GM13977 (cell line): ENCODE measurements at regions of chr12 and their contacts with region 1.

Region 1: DNA sequence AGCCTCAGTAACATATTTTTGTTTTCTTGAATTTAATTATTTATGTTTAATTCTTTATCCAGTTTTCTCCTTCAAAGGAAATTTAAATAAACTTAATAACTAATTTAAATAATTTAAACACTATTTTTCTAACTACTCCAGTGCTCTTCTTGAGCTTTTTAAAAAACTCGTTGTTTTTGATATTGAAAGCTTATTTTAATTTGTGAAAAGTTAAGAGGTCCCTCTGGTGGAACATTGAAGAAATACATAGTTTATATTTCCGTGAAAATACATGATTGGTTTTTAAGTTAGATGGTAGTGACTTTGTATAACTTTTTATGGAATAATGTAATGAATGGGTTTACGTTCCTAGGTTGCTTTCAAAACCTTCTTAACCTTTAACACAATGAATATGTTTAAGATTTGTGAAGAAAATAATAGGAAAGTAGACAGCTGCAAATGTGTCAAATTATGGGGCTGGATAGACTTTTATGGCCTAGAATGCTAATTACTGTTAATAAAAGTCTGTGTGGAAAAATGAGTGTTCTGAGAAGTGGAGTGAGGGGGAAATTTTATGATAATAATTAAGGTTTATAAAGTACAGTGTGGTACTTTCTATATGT is 45.9 kb upstream of the MSRB3 start:
- DNase-seq: peak; percentile 24
- CTCF ChIP-seq: peak; percentile 30

Region 2: GRCh38 chr12:64890873-64891468 is 341.6 kb before region 1 on chr12:
- in situ Hi-C with region 1: loop called (anchors 25 kb)
- DNase-seq: peak; percentile 46
- CTCF ChIP-seq: peak; percentile 64

Region 3: GRCh38 chr12:65169320-65170208 is 63.0 kb before region 1 on chr12 and contains the start of gene LEMD3:
- in situ Hi-C with region 1: loop called (anchors 10 kb)
- DNase-seq: peak; percentile 95
- CTCF ChIP-seq: no peak

Region 4: DNA sequence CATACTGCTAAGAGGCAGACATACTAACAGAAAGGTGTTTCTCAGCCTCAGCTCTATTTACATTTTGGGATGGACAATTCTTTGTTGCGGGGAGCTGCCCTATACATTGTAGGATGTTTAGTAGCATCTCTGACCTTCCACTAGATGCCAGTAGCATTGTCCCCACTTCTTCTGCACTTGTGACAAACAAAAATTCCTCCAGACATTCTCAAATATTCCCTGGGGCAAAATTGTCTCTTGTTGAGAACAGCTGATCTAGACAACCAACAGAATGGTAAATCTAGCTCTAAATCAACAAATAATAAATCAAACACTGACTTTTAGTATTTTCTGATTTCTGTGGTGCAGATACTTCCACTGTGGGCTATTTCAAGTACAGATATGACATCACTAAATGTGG is 106.5 kb after region 1 on chr12:
- in situ Hi-C with region 1: no loop called
- DNase-seq: no peak
- CTCF ChIP-seq: no peak

Region 5: DNA sequence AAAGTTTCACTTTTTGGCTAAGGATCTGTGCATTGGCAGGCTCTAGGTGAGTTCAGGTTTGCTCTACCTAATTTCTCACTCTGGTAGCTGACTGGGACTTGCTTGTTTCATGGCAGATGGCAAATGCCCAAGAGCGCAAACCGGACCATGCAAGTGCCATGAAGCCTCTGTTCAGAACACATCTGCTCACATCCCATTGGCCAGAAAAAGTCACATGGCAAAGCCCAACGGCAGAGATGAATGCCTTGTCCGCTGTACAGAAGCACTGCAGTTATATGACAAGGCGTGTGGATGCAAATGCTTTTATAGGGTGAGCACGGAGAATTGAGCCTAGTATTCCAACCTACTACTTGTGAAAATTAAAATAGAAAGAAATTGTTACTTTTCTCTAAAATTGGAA is 389.5 kb after region 1 on chr12:
- in situ Hi-C with region 1: no loop called
- DNase-seq: no peak
- CTCF ChIP-seq: no peak